Heart right ventricle (tissue), 16 donors: ENCODE measurements at regions of chr16 and their contacts with region 1.

Region 1: GRCh38 chr16:30698139-30698815 is 694 bp upstream of the SRCAP start:
- DNase-seq: peak; percentile 99
- ATAC-seq: peak; percentile 86 to 94 (median 90)
- H3K4me3 ChIP-seq: peak overlapping the region; percentile 84 to 100 (median 94)
- H3K27ac ChIP-seq: peak overlapping the region; percentile 97 to 100 (median 100)
- H3K4me1 ChIP-seq: peaks cover 0 to 43% (median 31%) of the 10 kb centered on the region in 9 donors
- H3K27me3 ChIP-seq: no peaks in the 10 kb centered on the region
- CTCF ChIP-seq: no peak

Region 2: GRCh38 chr16:30571695-30572600 is 126.3 kb before region 1 on chr16 and contains the start of gene ZNF688:
- intact Hi-C with region 1: no loop called
- DNase-seq: peak; percentile 94 to 97
- ATAC-seq: peak; percentile 88 to 96 (median 94)
- H3K4me3 ChIP-seq: peak within 1 kb of the TSS; percentile 65 to 90 (median 83)
- H3K27ac ChIP-seq: peak within 1 kb of the TSS; percentile 96 to 99 (median 99)
- H3K4me1 ChIP-seq: peaks cover 6 to 50% (median 23%) of the 10 kb centered on the region in 9 donors
- H3K27me3 ChIP-seq: no peaks in the 10 kb centered on the region
- CTCF ChIP-seq: peak in 1 of 9 donors; percentile 8
- total RNA-seq, gene ZNF688: 6.3 to 16.2 (median 12.4) TPM

Region 3: DNA sequence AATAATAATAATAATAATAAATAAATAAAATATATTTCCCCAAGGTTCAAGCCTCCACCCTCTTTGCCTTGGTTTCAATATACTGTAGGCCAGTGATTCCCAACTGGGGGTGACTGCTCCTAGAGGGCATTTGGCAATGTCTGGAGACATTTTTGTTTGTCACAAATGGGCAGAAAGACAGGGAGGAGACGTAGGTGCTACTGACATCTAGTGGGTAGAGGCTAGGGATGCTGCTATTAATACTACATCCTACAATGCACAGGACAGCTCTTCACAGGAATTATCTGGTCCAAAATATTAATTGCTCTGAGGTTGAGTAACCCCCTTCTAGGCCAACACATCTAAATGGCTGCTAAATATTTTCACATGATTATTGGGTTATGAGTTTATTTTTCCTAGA is 60.3 kb before region 1 on chr16:
- intact Hi-C with region 1: loop called in 1 of 10 experiments (anchors 10 kb)
- DNase-seq: no peak
- ATAC-seq: no peak
- H3K4me3 ChIP-seq: no peak overlapping the region
- H3K27ac ChIP-seq: no peak overlapping the region
- H3K4me1 ChIP-seq: peaks cover 0 to 25% (median 11%) of the 10 kb centered on the region in 9 donors
- H3K27me3 ChIP-seq: no peaks in the 10 kb centered on the region
- CTCF ChIP-seq: peak in 6 of 9 donors; percentile 12 to 39 (median 27)

Region 4: DNA sequence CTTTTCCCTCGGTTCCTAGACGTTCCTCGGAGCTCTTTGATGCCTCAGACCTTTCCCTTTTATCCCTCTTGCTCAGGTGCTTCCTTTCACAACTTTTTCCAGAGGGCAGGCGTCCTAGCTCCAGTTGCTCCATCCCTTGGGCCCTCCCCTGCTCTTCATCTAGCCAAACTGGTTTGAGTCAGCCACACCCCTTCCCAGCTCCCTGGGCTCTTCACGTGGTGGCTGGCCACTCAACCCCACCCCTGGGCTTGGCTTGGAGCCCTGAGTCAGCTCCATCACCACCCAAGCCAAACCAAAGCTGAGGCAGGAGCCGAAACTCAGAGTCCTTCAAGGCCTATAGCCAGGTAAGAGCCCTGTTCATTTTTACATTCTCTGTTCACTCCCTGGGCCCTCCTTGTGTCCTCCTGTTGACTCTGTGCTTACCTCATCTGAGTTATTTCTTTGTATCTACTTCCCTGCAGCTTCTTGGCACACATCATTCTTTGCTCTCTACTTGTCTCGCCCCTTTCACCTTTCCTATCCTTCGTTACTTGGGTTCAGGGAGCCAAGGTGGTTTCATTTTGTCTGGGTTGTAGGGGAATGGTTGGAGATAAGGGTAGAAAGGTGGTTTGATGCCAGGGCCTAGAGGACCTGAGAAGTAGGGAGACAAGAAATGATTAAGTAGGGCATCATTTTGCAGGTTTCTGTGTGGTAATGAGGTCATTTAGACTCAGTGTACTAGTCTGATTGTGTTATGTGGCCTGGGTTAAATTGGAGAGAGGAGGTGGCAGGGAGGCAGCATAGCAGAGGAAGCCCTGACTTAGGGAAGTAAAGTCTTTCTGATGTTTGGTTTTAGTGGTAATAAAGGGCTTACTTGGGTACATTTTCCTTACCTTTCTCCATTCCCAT is 42.3 kb after region 1 on chr16:
- intact Hi-C with region 1: loop called in 2 of 10 experiments (anchors 5 kb)
- DNase-seq: peak; percentile 76 to 80
- ATAC-seq: peak; percentile 59 to 85 (median 80)
- H3K4me3 ChIP-seq: peak overlapping the region in 1 of 10 donors; percentile 12
- H3K27ac ChIP-seq: peak overlapping the region in 9 of 10 donors; percentile 10 to 70 (median 53)
- H3K4me1 ChIP-seq: peaks cover 10 to 33% (median 21%) of the 10 kb centered on the region in 9 donors
- H3K27me3 ChIP-seq: no peaks in the 10 kb centered on the region
- CTCF ChIP-seq: no peak

Region 5: DNA sequence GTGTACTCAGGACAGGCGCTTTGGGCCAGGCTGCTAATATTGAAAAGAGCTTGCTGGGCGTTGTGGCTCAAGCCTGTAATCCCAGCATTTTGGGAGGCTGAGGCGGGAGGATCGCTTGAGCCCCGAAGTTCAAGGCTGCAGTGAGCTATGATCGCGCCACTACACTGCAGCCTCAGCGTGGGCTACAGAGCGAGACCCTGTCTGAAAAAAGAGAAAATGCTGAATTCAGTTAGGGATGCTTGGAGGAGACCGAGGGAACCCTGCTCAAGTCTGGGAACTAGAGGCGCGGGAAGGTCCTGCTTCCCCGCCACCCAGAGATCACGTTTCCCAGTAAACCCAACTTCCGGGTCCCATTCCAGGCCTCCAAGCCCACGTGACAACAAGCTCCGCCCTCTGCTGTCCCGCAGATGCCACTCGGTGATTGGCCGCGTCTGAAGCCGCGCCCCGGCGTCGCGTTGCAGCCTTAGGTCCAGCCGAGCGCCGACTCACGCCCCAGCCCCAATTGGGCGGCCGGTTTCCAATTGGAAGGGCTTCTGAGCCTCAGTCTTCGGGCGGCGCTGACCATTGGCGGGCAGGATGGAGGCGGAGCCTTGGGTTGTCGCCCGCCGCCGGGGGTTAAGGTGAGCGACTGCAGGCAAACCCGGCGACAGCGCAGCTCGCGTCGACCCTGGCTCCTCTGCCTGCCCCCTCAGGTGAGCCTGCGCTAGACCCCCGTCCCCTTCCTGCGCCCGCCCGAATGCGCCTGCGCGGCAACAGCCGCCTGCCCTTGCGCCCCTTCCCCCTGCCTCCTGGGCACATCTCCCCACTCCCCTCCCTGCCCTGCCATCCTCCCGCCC is 49.7 kb after region 1 on chr16 and contains the start of gene PHKG2:
- intact Hi-C with region 1: loop called in 2 of 10 experiments (anchors 5 kb)
- DNase-seq: peak; percentile 99
- ATAC-seq: peak; percentile 98 to 99 (median 98)
- H3K4me3 ChIP-seq: peak within 1 kb of the TSS; percentile 59 to 93 (median 76)
- H3K27ac ChIP-seq: peak within 1 kb of the TSS in 9 of 10 donors; percentile 61 to 88 (median 78)
- H3K4me1 ChIP-seq: peaks cover 0 to 17% (median 6%) of the 10 kb centered on the region in 9 donors
- H3K27me3 ChIP-seq: no peaks in the 10 kb centered on the region
- CTCF ChIP-seq: no peak
- total RNA-seq, gene PHKG2: 12.1 to 21.3 (median 15.0) TPM

Region 6: GRCh38 chr16:30761928-30762810 is 63.9 kb after region 1 on chr16 and contains the starts of genes CFAP119 and RNF40:
- intact Hi-C with region 1: loop called in 1 of 10 experiments (anchors 10 kb)
- DNase-seq: peak; percentile 95 to 98
- ATAC-seq: peak; percentile 93 to 99 (median 98)
- H3K4me3 ChIP-seq: peak within 1 kb of the TSS; percentile 84 to 94 (median 90)
- H3K27ac ChIP-seq: peak within 1 kb of the TSS; percentile 77 to 97 (median 93)
- H3K4me1 ChIP-seq: peaks cover 17 to 55% (median 41%) of the 10 kb centered on the region in 9 donors
- H3K27me3 ChIP-seq: no peaks in the 10 kb centered on the region
- CTCF ChIP-seq: no peak
- total RNA-seq, gene CFAP119: 0.44 to 2.2 (median 0.90) TPM
- total RNA-seq, gene RNF40: 33.0 to 69.9 (median 42.6) TPM